ENCODE measurements at regions of chr22 and their contacts with region 1.

Region 1: GRCh38 chr22:36977947-36978660 is 41.1 kb downstream of the TST start:
- DNase-seq: peak; percentile 94
- ATAC-seq: peak; percentile 87
- H3K4me3 Mint-ChIP-seq: peak overlapping the region; percentile 77
- H3K27ac Mint-ChIP-seq: peak overlapping the region; percentile 91
- H3K4me1 Mint-ChIP-seq: peaks cover 8% of the 10 kb centered on the region
- H3K27me3 Mint-ChIP-seq: peaks cover 2% of the 10 kb centered on the region
- CTCF ChIP-seq: peak; percentile 64

Region 2: GRCh38 chr22:36775964-36776669 is 202.0 kb before region 1 on chr22 and contains the start of gene IFT27:
- CTCF ChIA-PET with region 1: interaction called, 35 read pairs
- POLR2A ChIA-PET with region 1: interaction called, 4 read pairs
- intact Hi-C with region 1: loop called (anchors 5 kb)
- DNase-seq: peak; percentile 100
- ATAC-seq: peak; percentile 93
- H3K4me3 Mint-ChIP-seq: peak within 1 kb of the TSS; percentile 79
- H3K27ac Mint-ChIP-seq: peak within 1 kb of the TSS; percentile 94
- H3K4me1 Mint-ChIP-seq: peaks cover 32% of the 10 kb centered on the region
- H3K27me3 Mint-ChIP-seq: no peaks in the 10 kb centered on the region
- CTCF ChIP-seq: no peak
- total RNA-seq, gene IFT27: 20.0 to 21.9 TPM

Region 3: GRCh38 chr22:36873680-36874537 is 104.2 kb before region 1 on chr22:
- CTCF ChIA-PET with region 1: interaction called, 10 read pairs
- POLR2A ChIA-PET with region 1: no interaction called
- intact Hi-C with region 1: no loop called
- DNase-seq: peak; percentile 63
- ATAC-seq: peak; percentile 83
- H3K4me3 Mint-ChIP-seq: no peak overlapping the region
- H3K27ac Mint-ChIP-seq: peak overlapping the region; percentile 79
- H3K4me1 Mint-ChIP-seq: peaks cover 16% of the 10 kb centered on the region
- H3K27me3 Mint-ChIP-seq: no peaks in the 10 kb centered on the region
- CTCF ChIP-seq: no peak

Region 4: DNA sequence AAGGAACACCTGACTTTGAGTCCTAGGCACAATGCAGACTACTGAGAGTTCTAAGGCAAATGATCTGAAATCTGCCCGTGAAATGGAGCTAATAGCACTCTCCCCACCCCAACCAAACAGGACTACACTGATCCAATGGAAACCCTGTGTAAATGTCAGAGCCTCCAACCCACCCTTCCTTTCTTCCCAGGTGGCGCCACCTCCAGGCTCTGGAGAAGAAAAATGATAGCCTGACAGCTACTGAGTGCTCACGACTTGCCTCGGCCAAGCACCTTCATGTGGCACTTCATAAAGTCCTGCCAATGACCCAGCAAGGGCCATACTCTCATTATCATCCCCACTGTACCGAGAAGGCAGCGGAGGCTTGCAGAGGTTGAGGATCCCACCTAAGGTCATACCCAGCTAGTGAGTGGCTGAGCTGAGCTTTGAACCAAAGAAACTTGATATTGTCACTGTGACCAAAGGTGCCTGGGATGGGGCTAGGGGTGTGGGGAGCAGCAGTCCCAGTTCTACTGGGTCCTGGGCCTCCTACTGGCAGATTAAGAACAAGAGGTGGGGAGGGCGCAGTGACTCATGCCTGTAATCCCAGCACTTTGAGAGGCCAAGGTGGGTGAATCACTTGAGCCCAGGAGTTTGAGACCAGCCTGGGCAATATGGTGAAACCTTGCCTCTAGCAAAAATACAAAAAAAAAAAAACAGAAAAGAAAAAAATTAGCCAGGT is 20.7 kb after region 1 on chr22:
- CTCF ChIA-PET with region 1: interaction called, 12 read pairs
- POLR2A ChIA-PET with region 1: no interaction called
- intact Hi-C with region 1: no loop called
- DNase-seq: peak; percentile 19
- ATAC-seq: no peak
- H3K4me3 Mint-ChIP-seq: no peak overlapping the region
- H3K27ac Mint-ChIP-seq: no peak overlapping the region
- H3K4me1 Mint-ChIP-seq: no peaks in the 10 kb centered on the region
- H3K27me3 Mint-ChIP-seq: peaks cover 6% of the 10 kb centered on the region
- CTCF ChIP-seq: no peak

Measured in activated CD8-positive, alpha-beta T cell treated with anti-CD3 and anti-CD28 coated beads for 36 hours (primary cell).